A549 (cell line): ENCODE measurements at regions of chr12 and their contacts with region 1.

Region 1: DNA sequence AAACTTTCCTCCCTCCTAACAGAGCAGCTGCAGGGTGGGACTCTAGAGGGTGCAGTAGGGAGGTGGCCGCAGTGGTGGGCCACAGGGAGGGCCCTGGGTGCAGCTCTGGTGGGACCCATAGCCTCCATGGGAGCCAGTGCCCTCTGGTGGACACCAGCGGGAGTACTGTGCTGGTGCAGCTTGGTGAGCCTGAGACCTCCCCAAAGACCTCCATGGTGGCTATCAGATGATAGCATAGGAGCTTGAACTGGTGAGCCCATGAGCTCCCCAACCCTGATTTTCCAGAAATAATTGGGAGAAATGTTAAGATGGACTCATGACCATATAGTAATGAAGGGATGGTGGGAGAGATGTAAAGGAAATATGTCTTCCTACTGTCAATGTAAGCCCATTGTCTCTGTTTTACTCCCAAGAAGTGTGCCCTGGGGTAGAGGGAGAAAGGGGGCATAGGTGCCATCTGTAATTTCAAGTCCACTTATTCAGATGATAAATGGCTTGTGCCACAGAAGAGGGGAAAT is 98.7 kb downstream of the GAS2L3 start:
- DNase-seq: peak; percentile 21 to 29
- ATAC-seq: peak; percentile 54 to 89; a peak in 3 of 6 replicates
- H3K4me3 ChIP-seq: no peak overlapping the region
- H3K27ac ChIP-seq: no peak overlapping the region
- H3K4me1 ChIP-seq: no peaks in the 10 kb centered on the region
- CTCF ChIP-seq: peak; percentile 41; the same call in 2 of the 3 replicates
- EP300 ChIP-seq: no peak
- POLR2A ChIP-seq: no peak
- RAD21 ChIP-seq: peak in 1 of 2 experiments; percentile 33; a peak in 1 of 5 replicates

Region 2: GRCh38 chr12:100043631-100044030 is 628.5 kb before region 1 on chr12:
- CTCF ChIA-PET with region 1: no interaction called
- POLR2A ChIA-PET with region 1: no interaction called
- DNase-seq: no peak
- ATAC-seq: no peak
- H3K4me3 ChIP-seq: no peak overlapping the region
- H3K27ac ChIP-seq: no peak overlapping the region
- H3K4me1 ChIP-seq: no peaks in the 10 kb centered on the region
- CTCF ChIP-seq: no peak
- EP300 ChIP-seq: no peak
- POLR2A ChIP-seq: no peak
- RAD21 ChIP-seq: no peak

Region 3: DNA sequence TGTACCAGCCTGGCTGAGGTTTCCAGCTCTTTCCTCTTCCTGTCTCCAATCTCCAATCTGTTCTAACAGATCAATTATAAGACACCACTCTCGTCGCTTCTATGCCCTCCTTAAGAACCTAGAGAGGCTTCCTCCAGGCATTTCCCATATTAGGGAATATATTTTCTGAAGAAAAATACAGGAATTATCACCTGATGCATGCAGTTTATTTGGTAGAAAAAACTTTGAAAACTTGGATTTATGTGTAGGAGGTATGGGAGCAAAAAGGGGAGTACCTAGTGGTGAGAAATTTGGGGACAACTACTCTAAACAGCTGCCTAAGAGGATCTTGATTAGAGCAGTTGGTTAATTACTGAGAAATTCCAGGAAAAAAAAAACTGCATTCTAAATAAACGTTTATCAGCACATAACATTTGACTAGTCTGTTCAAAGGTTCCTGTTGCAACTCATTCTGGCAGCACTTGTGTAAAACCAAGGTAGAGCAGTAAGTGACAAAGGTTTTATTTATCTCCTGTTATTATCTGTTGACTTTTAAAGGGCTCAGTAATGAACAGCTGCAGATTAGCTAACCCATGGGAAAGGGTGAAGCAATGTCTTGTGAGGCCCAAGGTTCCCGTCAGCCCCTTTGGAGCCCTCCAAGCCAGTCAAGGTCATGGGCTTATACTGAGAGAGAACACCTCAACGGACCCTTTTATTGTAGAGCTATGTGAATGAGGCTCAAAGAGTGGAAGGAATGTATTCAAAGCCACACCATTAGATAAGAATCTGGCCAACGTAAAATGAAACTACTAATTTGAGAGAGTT is 234.9 kb before region 1 on chr12:
- CTCF ChIA-PET with region 1: no interaction called
- POLR2A ChIA-PET with region 1: no interaction called
- DNase-seq: no peak
- ATAC-seq: no peak
- H3K4me3 ChIP-seq: no peak overlapping the region
- H3K27ac ChIP-seq: no peak overlapping the region
- H3K4me1 ChIP-seq: no peaks in the 10 kb centered on the region
- CTCF ChIP-seq: no peak
- EP300 ChIP-seq: no peak
- POLR2A ChIP-seq: no peak
- RAD21 ChIP-seq: no peak

Region 4: GRCh38 chr12:100591975-100592374 is 80.2 kb before region 1 on chr12:
- CTCF ChIA-PET with region 1: no interaction called
- POLR2A ChIA-PET with region 1: no interaction called
- DNase-seq: no peak
- ATAC-seq: no peak
- H3K4me3 ChIP-seq: no peak overlapping the region
- H3K27ac ChIP-seq: no peak overlapping the region
- H3K4me1 ChIP-seq: peaks cover 13% of the 10 kb centered on the region; the same call in 2 of the 3 replicates
- CTCF ChIP-seq: no peak
- EP300 ChIP-seq: no peak
- POLR2A ChIP-seq: no peak
- RAD21 ChIP-seq: no peak

Region 5: DNA sequence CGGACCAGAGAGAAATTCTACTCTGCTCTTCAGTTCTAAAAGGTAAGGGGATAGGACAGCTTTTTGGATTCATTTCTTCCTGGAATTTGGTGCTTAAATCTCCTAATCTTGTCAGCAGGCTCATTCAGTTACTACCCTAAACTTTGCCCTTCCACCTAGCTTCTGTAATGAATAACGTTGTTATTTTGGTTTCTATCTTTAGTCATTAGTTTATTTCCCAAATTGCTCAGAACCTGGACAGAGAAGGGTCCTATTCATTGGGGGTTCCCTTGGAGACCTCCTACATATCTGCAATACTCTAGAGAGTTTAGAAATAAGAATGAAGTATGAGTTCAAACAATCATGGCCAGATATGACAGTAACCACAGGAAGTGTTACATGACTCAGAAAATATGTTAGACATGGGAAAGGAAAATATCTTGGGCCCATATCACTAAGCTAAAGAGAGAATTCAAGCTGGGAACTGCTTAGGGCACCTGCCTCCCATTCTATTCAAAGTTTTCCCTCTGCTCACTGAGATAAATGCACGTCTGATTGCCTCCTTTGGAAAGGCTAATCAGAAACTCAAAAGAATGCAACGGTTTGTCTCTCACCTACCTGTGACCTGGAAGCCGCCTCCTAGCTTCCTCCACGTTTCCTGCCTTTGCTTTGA is 10.7 kb before region 1 on chr12:
- CTCF ChIA-PET with region 1: interaction called, 19 read pairs
- POLR2A ChIA-PET with region 1: no interaction called
- DNase-seq: no peak
- ATAC-seq: no peak
- H3K4me3 ChIP-seq: no peak overlapping the region
- H3K27ac ChIP-seq: no peak overlapping the region
- H3K4me1 ChIP-seq: no peaks in the 10 kb centered on the region
- CTCF ChIP-seq: no peak
- EP300 ChIP-seq: no peak
- POLR2A ChIP-seq: no peak
- RAD21 ChIP-seq: no peak

Region 6: DNA sequence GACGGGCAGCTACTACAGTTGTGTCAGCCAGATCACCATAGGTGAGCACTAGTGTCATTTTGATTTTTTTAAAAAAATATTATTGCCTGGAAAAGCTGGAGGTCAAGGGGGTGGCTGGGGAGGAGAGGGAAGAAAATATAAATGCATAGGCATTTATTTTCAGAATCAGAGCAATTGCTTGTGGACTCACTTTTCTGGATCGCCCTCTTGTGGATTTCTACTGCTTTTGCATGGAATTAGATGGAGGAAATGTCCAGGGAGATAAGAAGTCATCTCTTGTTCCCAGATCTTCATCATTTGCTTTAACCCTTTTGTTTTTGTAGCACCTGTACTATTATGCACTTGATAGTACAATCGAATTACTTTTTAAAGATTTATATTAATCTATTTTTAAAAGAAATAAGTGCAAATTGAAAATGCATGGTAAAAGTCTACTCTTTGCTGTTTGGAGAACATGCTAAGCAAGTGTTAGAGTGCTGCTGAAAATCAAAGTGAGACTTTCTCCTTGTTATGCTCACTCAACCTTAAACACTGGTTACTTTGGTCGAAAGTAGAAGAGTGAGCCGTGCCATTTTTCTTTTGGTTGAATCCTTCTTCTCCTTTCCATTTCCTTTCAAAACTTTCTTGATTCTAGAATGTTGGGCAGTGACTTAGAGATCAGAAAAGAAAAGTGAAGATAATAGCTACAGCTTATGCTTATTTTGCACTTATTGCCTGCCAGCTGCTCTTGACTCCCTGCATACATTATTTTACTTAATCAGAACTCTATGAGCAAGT is 61.9 kb after region 1 on chr12:
- CTCF ChIA-PET with region 1: interaction called, 11 read pairs
- POLR2A ChIA-PET with region 1: no interaction called
- DNase-seq: peak; percentile 17 to 60
- ATAC-seq: peak in 1 of 2 experiments; percentile 87; a peak in 3 of 6 replicates
- H3K4me3 ChIP-seq: no peak overlapping the region
- H3K27ac ChIP-seq: no peak overlapping the region
- H3K4me1 ChIP-seq: no peaks in the 10 kb centered on the region
- CTCF ChIP-seq: peak; percentile 64
- EP300 ChIP-seq: no peak
- POLR2A ChIP-seq: no peak
- RAD21 ChIP-seq: peak; percentile 54 to 60

Region 7: DNA sequence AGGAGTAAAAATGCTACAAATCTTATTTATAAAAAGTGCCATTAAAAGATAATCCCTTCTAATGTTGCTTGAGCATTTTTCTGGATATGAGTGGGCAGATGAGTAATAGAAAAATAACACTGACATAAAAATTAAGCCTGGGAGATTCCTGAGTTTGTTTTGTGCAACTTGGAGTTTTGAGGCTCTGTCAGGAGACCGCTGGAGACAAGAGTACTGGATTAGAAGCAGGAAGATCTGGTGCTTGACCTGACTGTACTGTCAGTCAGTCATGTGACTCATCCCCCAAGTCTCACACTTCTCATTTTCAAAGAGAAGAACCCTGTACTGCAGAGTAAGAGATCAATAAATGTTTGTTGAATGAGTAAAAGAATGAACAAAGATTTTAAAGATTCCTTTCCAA is 151.8 kb after region 1 on chr12:
- CTCF ChIA-PET with region 1: no interaction called
- POLR2A ChIA-PET with region 1: no interaction called
- DNase-seq: no peak
- ATAC-seq: no peak
- H3K4me3 ChIP-seq: no peak overlapping the region
- H3K27ac ChIP-seq: no peak overlapping the region
- H3K4me1 ChIP-seq: no peaks in the 10 kb centered on the region
- CTCF ChIP-seq: no peak
- EP300 ChIP-seq: no peak
- POLR2A ChIP-seq: no peak
- RAD21 ChIP-seq: no peak